ENCODE measurements at regions of chr21 and their contacts with region 1.

Region 1: DNA sequence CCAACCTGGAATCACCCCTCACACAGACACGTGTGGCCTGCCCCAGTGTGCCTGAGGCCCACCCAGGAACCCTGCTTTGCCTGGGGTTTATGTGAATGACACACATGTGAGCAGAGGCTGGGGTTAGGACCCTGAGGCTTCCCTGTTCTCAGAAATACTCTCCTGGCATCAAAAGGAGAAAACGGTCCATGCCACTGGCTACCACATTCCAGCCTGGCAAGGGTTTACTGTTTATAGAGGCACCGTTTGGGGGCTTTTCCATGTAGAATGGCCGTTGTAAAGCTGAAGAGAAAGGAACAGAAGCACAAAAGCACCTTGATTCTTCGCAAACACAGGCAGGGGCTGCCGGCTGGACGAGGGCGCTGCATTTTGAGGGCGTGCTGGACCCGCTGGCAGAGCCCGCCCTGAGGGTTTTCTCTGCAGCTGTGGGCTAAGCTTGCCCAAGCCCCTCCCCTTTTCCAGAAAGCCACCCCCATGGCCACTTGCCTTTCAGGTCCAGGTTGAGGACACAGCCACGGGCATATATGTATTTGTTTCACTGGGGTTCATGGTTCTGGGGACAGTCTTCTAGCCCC is 13.0 kb downstream of the TFF3 start:
- DNase-seq: no peak
- H3K4me3 ChIP-seq: no peak overlapping the region
- H3K27ac ChIP-seq: no peak overlapping the region
- H3K4me1 ChIP-seq: peaks cover 10% of the 10 kb centered on the region
- H3K27me3 ChIP-seq: no peaks in the 10 kb centered on the region
- CTCF ChIP-seq: no peak
- POLR2A ChIP-seq: no peak

Region 2: GRCh38 chr21:42227909-42228708 is 74.1 kb before region 1 on chr21:
- CTCF ChIA-PET with region 1: no interaction called
- POLR2A ChIA-PET with region 1: no interaction called
- dilution Hi-C with region 1: no loop called
- intact Hi-C with region 1: loop called (anchors 2 kb)
- DNase-seq: peak; percentile 89
- H3K4me3 ChIP-seq: no peak overlapping the region
- H3K27ac ChIP-seq: peak overlapping the region; percentile 11
- H3K4me1 ChIP-seq: peaks cover 16% of the 10 kb centered on the region
- H3K27me3 ChIP-seq: peaks cover 0 to 4% of the 10 kb centered on the region in 2 experiments
- CTCF ChIP-seq: no peak
- POLR2A ChIP-seq: no peak

Region 3: GRCh38 chr21:42286416-42286815 is 15.7 kb before region 1 on chr21:
- CTCF ChIA-PET with region 1: no interaction called
- POLR2A ChIA-PET with region 1: no interaction called
- dilution Hi-C with region 1: no loop called
- intact Hi-C with region 1: no loop called
- DNase-seq: no peak
- H3K4me3 ChIP-seq: no peak overlapping the region
- H3K27ac ChIP-seq: no peak overlapping the region
- H3K4me1 ChIP-seq: no peaks in the 10 kb centered on the region
- H3K27me3 ChIP-seq: no peaks in the 10 kb centered on the region
- CTCF ChIP-seq: no peak
- POLR2A ChIP-seq: no peak

Region 4: GRCh38 chr21:42453509-42454229 is 151.5 kb after region 1 on chr21:
- CTCF ChIA-PET with region 1: no interaction called
- POLR2A ChIA-PET with region 1: no interaction called
- dilution Hi-C with region 1: no loop called
- intact Hi-C with region 1: no loop called
- DNase-seq: no peak
- H3K4me3 ChIP-seq: no peak overlapping the region
- H3K27ac ChIP-seq: no peak overlapping the region
- H3K4me1 ChIP-seq: no peaks in the 10 kb centered on the region
- H3K27me3 ChIP-seq: peaks cover 2% of the 10 kb centered on the region in 2 experiments
- CTCF ChIP-seq: no peak
- POLR2A ChIP-seq: no peak